ENCODE measurements at regions of chr10 and their contacts with region 1.

Region 1: GRCh38 chr10:65065278-65065677 is 1544.1 kb downstream of the REEP3 start:
- DNase-seq: no peak
- ATAC-seq: no peak
- H3K4me3 ChIP-seq: no peak overlapping the region
- H3K27ac ChIP-seq: no peak overlapping the region
- H3K4me1 ChIP-seq: no peaks in the 10 kb centered on the region
- H3K27me3 ChIP-seq: no peaks in the 10 kb centered on the region
- CTCF ChIP-seq: 0 out of 2 replicates have a peak, but pooled peaks have one; percentile 20

Region 2: DNA sequence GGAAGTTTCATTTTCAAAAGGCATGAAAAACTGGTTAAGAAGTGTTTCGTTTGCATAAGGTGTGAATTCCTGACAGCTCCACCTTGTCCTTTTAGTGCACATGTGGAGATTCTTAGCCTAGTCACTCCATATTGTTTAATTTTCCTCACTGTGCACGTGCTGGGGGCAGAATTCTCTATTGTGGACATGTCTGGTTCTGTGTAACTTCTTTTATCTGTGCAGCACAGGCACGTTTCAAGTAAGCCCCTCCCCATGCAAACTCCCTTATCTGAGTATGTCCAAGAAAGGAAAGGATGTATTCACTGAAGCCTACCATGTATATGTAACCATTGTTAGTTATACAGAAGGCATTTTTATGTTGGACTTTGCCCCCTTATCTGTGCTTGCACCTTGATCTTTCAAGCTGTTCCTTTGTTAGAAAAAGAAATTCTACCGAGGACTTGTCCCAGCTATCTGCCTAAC is 197.7 kb before region 1 on chr10:
- CTCF ChIA-PET with region 1: no interaction called
- POLR2A ChIA-PET with region 1: no interaction called
- intact Hi-C with region 1: loop called (anchors 10 kb)
- DNase-seq: no peak
- ATAC-seq: peak; percentile 16; the same call in 1 of the 2 replicates
- H3K4me3 ChIP-seq: no peak overlapping the region
- H3K27ac ChIP-seq: no peak overlapping the region
- H3K4me1 ChIP-seq: no peaks in the 10 kb centered on the region
- H3K27me3 ChIP-seq: no peaks in the 10 kb centered on the region
- CTCF ChIP-seq: no peak